ENCODE measurements at regions of chr2 and their contacts with region 1.

Region 1: GRCh38 chr2:119407430-119408220 is 24.0 kb upstream of the TMEM37 start:
- DNase-seq: peak; percentile 42 to 82 (median 59)
- H3K4me3 ChIP-seq: no peak overlapping the region
- H3K27ac ChIP-seq: no peak overlapping the region
- H3K4me1 ChIP-seq: peaks cover 0 to 7% of the 10 kb centered on the region in 2 donors
- H3K27me3 ChIP-seq: no peaks in the 10 kb centered on the region
- CTCF ChIP-seq: peak; percentile 72 to 97 (median 91)
- POLR2A ChIP-seq: no peak

Region 2: DNA sequence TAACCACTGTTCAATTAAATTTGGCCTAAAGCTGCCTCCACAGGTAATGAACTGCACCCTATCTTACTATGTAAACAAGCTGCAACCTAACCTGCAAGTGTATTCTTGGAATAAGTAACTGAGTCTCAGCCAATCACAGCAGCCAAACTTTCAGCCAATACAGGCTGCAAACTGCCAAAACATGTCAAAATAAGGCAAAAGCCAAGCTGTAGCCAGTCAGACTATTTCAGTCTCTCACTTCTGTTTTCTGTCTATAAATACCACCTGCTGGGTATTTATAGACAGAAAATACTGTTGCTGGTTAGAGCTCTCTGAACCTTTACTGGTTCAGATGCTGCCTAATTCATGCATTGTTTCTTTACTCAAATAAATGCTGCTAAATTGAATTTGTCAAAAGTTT is 55.3 kb before region 1 on chr2:
- intact Hi-C with region 1: no loop called
- DNase-seq: no peak
- H3K4me3 ChIP-seq: no peak overlapping the region
- H3K27ac ChIP-seq: no peak overlapping the region
- H3K4me1 ChIP-seq: no peaks in the 10 kb centered on the region
- H3K27me3 ChIP-seq: no peaks in the 10 kb centered on the region
- CTCF ChIP-seq: no peak
- POLR2A ChIP-seq: no peak

Region 3: DNA sequence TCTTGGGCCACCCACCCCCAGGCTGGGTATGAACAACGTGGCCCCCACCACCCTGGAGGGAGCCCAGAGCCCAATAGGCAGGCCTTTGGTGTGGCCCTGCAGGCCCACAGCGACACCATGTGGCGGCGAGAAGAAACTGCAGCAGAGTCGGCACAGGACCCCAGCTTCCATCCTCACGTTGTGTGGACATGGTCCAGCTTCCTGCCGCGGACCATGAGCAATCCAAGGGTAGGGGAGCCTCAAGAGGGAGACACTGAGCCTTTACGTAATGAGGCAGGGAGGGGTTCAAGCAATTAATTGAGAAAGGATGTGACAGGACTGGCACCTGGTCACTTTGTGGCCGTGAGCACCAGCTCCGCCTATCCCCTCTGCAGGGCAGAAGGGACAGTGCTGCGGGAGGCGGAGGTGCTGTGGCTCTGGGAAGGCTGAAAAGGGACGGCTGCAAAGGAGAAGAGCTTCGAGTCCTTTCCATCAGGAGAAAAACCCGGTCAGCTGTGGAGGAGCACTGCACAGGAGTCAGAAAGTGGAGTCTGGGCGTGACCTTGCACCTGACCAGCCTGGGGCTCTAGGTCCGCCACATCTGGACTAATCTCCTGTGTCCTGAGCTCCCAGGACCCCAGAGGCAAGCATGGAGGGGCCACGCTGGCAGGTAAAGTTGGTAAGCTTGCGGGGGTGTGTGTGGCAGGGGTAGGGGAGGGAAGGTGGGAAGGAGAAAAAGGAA is 68.8 kb after region 1 on chr2:
- intact Hi-C with region 1: loop called (anchors 2 kb)
- DNase-seq: peak; percentile 49 to 76 (median 61)
- H3K4me3 ChIP-seq: peak overlapping the region in 1 of 4 donors; percentile 20
- H3K27ac ChIP-seq: no peak overlapping the region
- H3K4me1 ChIP-seq: peaks cover 0 to 3% of the 10 kb centered on the region in 2 donors
- H3K27me3 ChIP-seq: no peaks in the 10 kb centered on the region
- CTCF ChIP-seq: peak; percentile 93 to 100 (median 96)
- POLR2A ChIP-seq: no peak

Region 4: DNA sequence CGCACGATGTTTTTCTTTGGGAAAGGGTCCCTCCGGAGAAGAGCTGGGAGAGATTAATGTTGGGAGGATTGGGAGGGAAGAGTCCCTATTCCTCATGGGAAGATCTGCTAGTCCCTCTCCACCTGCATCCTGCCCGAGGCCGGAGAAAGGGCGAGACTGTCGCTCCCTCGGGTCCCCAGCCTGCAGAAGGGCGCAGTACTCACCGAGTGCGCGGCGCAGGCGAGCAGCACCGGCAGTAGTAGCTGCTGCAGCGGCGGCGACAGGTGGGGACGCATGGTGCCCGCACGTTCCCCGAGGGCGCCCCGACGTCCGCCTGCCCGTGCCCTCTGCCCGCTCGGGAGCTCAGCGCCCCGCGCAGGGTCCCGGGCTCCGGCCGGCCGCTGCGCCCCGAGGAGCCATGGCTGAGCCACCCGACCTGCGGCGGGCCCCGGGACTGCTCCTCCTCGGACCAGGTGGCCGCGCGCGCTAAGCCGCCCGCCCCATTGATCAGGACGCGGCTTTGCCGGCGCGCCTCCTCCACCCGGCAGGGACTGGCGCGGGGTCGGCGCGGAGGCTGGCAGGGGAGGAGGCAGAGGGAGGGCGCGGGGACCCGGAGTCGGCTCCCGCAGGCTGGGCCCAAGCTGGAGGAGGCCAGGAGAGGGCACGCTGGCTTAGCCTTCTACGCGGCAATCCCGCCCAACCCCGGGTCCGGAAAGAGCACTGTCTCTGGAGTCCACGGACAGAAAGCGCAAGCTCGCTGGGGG is 116.5 kb after region 1 on chr2 and contains the start of gene SCTR:
- intact Hi-C with region 1: no loop called
- DNase-seq: peak in 1 of 7 donors; percentile 14
- H3K4me3 ChIP-seq: peak within 1 kb of the TSS in 1 of 4 donors; percentile 32
- H3K27ac ChIP-seq: no peak within 1 kb of the TSS
- H3K4me1 ChIP-seq: no peaks in the 10 kb centered on the region
- H3K27me3 ChIP-seq: peaks cover 26% of the 10 kb centered on the region
- CTCF ChIP-seq: peak in 1 of 6 experiments; percentile 20
- POLR2A ChIP-seq: no peak
- total RNA-seq, gene SCTR: 0.33 to 1.6 (median 0.44) TPM in 4 of 9 donors, not detected in the others

Measured in adrenal gland (tissue), 19 donors.